Breast epithelium (tissue), 4 donors: ENCODE measurements at regions of chr17 and their contacts with region 1.

Region 1: DNA sequence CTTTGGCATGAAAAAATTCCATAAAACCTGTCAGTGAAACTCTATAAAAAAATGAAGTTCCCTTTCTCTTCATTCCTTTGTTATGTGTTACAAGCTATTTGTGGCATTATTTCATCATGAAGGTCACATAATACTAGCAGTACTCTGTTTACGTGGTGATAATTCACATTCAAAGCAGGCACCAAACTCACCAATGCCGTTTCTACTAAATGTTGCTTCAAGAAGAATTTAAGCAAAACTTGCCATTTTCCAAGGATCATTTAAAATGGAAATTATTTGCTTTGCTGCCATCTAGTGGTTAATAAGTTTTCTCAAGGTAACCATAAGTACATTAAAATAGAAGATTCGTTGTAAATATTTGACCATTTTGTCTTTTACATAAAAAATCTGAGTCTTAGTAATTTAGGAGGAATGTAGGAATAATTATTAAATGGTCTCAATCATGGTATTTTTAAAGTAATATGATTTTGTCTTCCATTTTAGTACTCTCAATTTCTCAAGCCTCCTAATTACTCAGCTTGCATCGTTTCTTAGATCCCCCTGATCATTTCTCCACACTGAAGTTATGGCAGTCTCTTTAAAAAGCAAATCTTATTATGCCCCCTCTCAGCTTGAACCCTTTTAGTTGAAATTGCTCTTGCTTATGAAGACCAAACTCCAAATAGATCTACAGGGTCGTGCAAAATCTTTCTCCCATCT is 80.8 kb downstream of the OMG start:
- DNase-seq: no peak
- H3K4me3 ChIP-seq: no peak overlapping the region
- H3K27ac ChIP-seq: no peak overlapping the region
- H3K4me1 ChIP-seq: no peaks in the 10 kb centered on the region
- H3K27me3 ChIP-seq: no peaks in the 10 kb centered on the region
- CTCF ChIP-seq: peak; percentile 23 to 61 (median 54)
- POLR2A ChIP-seq: no peak

Region 2: DNA sequence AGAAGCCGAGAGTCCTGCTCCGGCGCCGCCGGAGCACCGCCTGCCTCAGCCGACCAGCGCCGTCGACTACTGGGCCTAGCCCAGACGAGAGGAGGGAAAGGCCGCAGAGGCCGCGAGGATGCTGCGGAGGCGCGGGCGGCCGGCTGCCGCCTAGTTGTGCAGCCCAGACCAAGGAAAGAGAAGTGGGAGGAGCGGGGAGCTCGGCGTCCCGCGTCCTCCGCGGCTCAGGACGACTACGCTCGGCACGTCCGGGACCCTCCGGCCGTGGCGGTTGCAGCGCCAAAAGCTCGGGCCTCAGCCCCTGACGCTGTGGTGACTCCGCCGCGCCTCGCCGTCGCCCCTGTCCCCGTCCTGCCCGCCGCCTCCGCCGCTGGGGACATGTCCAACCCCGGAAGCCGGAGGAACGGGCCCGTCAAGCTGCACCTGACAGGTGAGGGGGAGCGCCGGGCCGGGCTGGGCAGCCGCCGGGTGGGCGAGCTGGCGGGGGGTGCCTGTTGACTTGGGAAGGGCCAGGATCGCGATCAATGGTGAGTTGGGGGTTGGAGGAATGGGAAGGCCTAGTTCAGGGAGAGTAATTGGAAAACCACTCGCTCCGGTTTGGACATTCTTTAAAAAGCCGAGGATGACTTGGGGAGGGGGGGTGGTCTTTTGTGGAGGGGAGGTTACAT is 207.7 kb before region 1 on chr17:
- intact Hi-C with region 1: loop called (anchors 2 kb)
- DNase-seq: peak; percentile 48 to 62
- H3K4me3 ChIP-seq: peak overlapping the region; percentile 68 to 84 (median 74)
- H3K27ac ChIP-seq: peak overlapping the region; percentile 91 to 94
- H3K4me1 ChIP-seq: no peaks in the 10 kb centered on the region
- H3K27me3 ChIP-seq: no peaks in the 10 kb centered on the region
- CTCF ChIP-seq: no peak
- POLR2A ChIP-seq: no peak

Region 3: DNA sequence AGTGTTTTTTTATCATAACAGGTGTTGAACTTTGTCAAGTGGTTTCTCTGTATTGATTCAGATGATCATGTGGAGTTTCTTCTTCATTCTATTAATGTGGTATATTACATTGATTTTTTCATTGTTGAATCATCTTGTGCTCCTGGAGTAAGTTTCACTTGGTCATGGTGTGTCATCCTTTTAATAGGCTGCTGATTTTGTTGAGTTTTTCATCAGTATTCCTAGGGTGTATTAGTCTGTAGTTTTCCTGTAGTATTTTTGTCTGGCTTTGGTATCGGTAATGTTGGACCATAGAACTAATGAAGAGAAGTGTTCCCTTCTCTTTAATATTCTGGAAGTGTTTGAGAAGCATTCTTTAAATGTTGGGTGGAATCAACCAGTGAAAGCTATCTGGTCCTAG is 18.2 kb before region 1 on chr17:
- intact Hi-C with region 1: no loop called
- DNase-seq: no peak
- H3K4me3 ChIP-seq: no peak overlapping the region
- H3K27ac ChIP-seq: no peak overlapping the region
- H3K4me1 ChIP-seq: no peaks in the 10 kb centered on the region
- H3K27me3 ChIP-seq: no peaks in the 10 kb centered on the region
- CTCF ChIP-seq: no peak
- POLR2A ChIP-seq: no peak

Region 4: GRCh38 chr17:32111141-32111771 is 895.1 kb after region 1 on chr17:
- intact Hi-C with region 1: no loop called
- DNase-seq: peak in 1 of 2 donors; percentile 58
- H3K4me3 ChIP-seq: peak overlapping the region in 1 of 3 donors; percentile 27
- H3K27ac ChIP-seq: no peak overlapping the region
- H3K4me1 ChIP-seq: no peaks in the 10 kb centered on the region
- H3K27me3 ChIP-seq: no peaks in the 10 kb centered on the region
- CTCF ChIP-seq: no peak
- POLR2A ChIP-seq: no peak